Activated CD4-positive, alpha-beta T cell treated with anti-CD3 and anti-CD28 coated beads for 36 hours (primary cell): ENCODE measurements at regions of chr1 and their contacts with region 1.

Region 1: GRCh38 chr1:204411451-204412204 is at the start of gene PPP1R15B:
- DNase-seq: peak; percentile 98
- ATAC-seq: peak; percentile 92
- H3K4me3 Mint-ChIP-seq: peak within 1 kb of the TSS; percentile 98
- H3K27ac Mint-ChIP-seq: peak within 1 kb of the TSS; percentile 100
- H3K4me1 Mint-ChIP-seq: peaks cover 10% of the 10 kb centered on the region
- H3K27me3 Mint-ChIP-seq: no peaks in the 10 kb centered on the region
- total RNA-seq, gene PPP1R15B: 55.9 to 57.6 TPM

Region 2: GRCh38 chr1:202926720-202927491 is 1484.7 kb before region 1 on chr1 and contains the start of gene KLHL12:
- CTCF ChIA-PET with region 1: no interaction called
- POLR2A ChIA-PET with region 1: no interaction called
- intact Hi-C with region 1: loop called in 1 of 2 experiments (anchors 5 kb)
- DNase-seq: peak; percentile 98
- ATAC-seq: peak; percentile 96
- H3K4me3 Mint-ChIP-seq: peak within 1 kb of the TSS; percentile 86
- H3K27ac Mint-ChIP-seq: peak within 1 kb of the TSS; percentile 85
- H3K4me1 Mint-ChIP-seq: peaks cover 24% of the 10 kb centered on the region
- H3K27me3 Mint-ChIP-seq: no peaks in the 10 kb centered on the region
- total RNA-seq, gene KLHL12: 32.1 to 39.1 TPM

Region 3: GRCh38 chr1:203290261-203291089 is 1121.2 kb before region 1 on chr1:
- CTCF ChIA-PET with region 1: no interaction called
- POLR2A ChIA-PET with region 1: no interaction called
- intact Hi-C with region 1: loop called in 1 of 2 experiments (anchors 5 kb)
- DNase-seq: peak; percentile 99
- ATAC-seq: peak; percentile 50
- H3K4me3 Mint-ChIP-seq: peak overlapping the region; percentile 78
- H3K27ac Mint-ChIP-seq: peak overlapping the region; percentile 98
- H3K4me1 Mint-ChIP-seq: peaks cover 83% of the 10 kb centered on the region
- H3K27me3 Mint-ChIP-seq: no peaks in the 10 kb centered on the region

Region 4: GRCh38 chr1:203795441-203796235 is 616.0 kb before region 1 on chr1 and contains the starts of genes ZBED6 and ZC3H11A:
- CTCF ChIA-PET with region 1: no interaction called
- POLR2A ChIA-PET with region 1: no interaction called
- intact Hi-C with region 1: loop called in 1 of 2 experiments (anchors 1 kb)
- DNase-seq: peak; percentile 99
- ATAC-seq: peak; percentile 99
- H3K4me3 Mint-ChIP-seq: peak within 1 kb of the TSS; percentile 86
- H3K27ac Mint-ChIP-seq: peak within 1 kb of the TSS; percentile 96
- H3K4me1 Mint-ChIP-seq: peaks cover 45% of the 10 kb centered on the region
- H3K27me3 Mint-ChIP-seq: no peaks in the 10 kb centered on the region
- total RNA-seq, gene ZBED6: 16.4 to 19.3 TPM
- total RNA-seq, gene ZC3H11A: 92.8 to 112 TPM

Region 5: GRCh38 chr1:204494281-204495077 is 82.9 kb after region 1 on chr1 and contains the start of gene PIK3C2B:
- CTCF ChIA-PET with region 1: interaction called, 4 read pairs
- POLR2A ChIA-PET with region 1: interaction called, 6 read pairs
- intact Hi-C with region 1: loop called (anchors 1 kb)
- DNase-seq: peak; percentile 86
- ATAC-seq: peak; percentile 77
- H3K4me3 Mint-ChIP-seq: peak within 1 kb of the TSS; percentile 95
- H3K27ac Mint-ChIP-seq: peak within 1 kb of the TSS; percentile 91
- H3K4me1 Mint-ChIP-seq: peaks cover 62% of the 10 kb centered on the region
- H3K27me3 Mint-ChIP-seq: no peaks in the 10 kb centered on the region
- total RNA-seq, gene PIK3C2B: 38.2 to 44.0 TPM

Region 6: GRCh38 chr1:204516180-204516879 is 104.7 kb after region 1 on chr1 and contains the start of gene MDM4:
- CTCF ChIA-PET with region 1: no interaction called
- POLR2A ChIA-PET with region 1: interaction called, 3 read pairs
- intact Hi-C with region 1: loop called in 1 of 2 experiments (anchors 1 kb)
- DNase-seq: peak; percentile 98
- ATAC-seq: peak; percentile 85
- H3K4me3 Mint-ChIP-seq: no peak within 1 kb of the TSS
- H3K27ac Mint-ChIP-seq: no peak within 1 kb of the TSS
- H3K4me1 Mint-ChIP-seq: peaks cover 62% of the 10 kb centered on the region
- H3K27me3 Mint-ChIP-seq: no peaks in the 10 kb centered on the region
- total RNA-seq, gene MDM4: 89.1 to 94.6 TPM

Region 7: GRCh38 chr1:204615881-204616280 is 204.3 kb after region 1 on chr1:
- CTCF ChIA-PET with region 1: no interaction called
- POLR2A ChIA-PET with region 1: no interaction called
- intact Hi-C with region 1: no loop called
- DNase-seq: no peak
- ATAC-seq: no peak
- H3K4me3 Mint-ChIP-seq: no peak overlapping the region
- H3K27ac Mint-ChIP-seq: no peak overlapping the region
- H3K4me1 Mint-ChIP-seq: no peaks in the 10 kb centered on the region
- H3K27me3 Mint-ChIP-seq: no peaks in the 10 kb centered on the region

Region 8: DNA sequence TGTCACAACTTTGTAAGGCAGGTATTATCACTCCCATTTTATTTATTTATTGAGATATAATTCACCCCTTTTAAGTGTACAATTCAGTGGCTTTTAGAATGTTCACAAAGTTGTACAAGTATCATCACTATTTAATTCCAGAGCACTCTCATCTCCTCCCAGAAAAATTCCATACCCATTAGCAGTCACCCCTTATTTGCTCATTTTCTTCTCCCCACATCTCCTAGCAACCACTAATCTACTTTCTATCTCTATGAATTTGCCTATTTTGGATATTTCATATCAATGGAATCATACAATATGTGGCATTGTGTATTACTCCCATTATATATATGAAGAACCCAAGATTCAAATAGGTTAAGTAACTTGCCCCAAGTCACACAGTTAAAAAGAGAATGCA is 792.9 kb after region 1 on chr1:
- CTCF ChIA-PET with region 1: no interaction called
- POLR2A ChIA-PET with region 1: no interaction called
- intact Hi-C with region 1: loop called in 1 of 2 experiments (anchors 10 kb)
- DNase-seq: no peak
- ATAC-seq: no peak
- H3K4me3 Mint-ChIP-seq: peak overlapping the region; percentile 0
- H3K27ac Mint-ChIP-seq: peak overlapping the region; percentile 85
- H3K4me1 Mint-ChIP-seq: peaks cover 74% of the 10 kb centered on the region
- H3K27me3 Mint-ChIP-seq: no peaks in the 10 kb centered on the region